Head of caudate nucleus (tissue), 42 donors: ENCODE measurements at regions of chr3 and their contacts with region 1.

Region 1: DNA sequence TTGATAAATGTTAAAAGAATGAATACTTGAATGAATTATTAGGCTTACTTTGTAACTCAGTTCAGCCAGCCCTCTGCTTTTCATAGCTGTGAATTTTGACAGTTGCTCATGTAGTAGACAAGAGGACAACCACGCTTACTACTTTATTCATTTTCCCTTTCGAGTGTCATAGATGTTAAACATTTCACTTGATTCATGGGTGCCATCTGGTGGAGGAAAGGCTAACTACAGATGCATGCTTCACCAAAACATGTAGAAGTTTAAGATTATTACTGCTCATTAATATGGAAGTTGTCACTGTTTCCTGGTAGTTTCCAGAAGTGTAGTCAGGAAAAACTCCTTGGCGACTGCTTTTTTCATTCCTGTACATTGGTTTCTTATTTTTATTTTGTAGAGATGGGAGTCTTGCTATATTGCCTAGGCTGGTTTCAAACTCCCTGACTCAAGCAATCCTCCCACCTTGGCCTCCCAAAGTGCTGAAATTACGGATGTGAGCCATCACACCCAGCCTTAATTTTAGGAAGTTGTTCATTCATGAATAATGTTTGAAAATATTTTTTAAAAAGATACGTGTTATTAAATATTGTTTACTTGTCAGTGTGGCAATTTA is 163.2 kb downstream of the B3GALNT1 start:
- DNase-seq: peak in 38 of 42 donors; percentile 25 to 95 (median 78)

Region 2: DNA sequence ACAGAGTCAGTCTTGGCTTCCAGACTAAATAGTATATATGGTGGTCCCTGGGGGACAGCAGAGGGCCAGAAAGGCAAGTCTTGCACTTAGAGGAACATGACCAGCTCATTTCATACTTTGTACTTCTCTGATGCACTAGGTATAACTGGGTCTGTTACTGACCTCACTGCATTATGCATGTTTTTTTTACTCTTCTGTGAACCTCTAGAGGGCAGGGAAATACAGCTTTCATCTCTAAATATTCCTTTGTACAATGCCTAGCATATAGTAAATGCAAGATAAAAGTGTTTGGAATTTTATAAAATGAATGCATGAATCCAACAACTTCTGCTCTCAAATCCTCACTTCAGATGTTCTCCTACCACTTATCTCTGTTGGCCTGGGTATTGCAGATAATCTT is 288.5 kb before region 1 on chr3:
- intact Hi-C with region 1: no loop called
- DNase-seq: no peak

Region 3: GRCh38 chr3:160707187-160707794 is 234.7 kb before region 1 on chr3:
- intact Hi-C with region 1: loop called (anchors 5 kb)
- DNase-seq: peak in 31 of 42 donors; percentile 8 to 75 (median 53)

Region 4: GRCh38 chr3:160804762-160805161 is 137.2 kb before region 1 on chr3:
- intact Hi-C with region 1: no loop called
- DNase-seq: peak in 22 of 42 donors; percentile 11 to 64 (median 32)